ENCODE measurements at regions of chr15 and their contacts with region 1.

Region 1: DNA sequence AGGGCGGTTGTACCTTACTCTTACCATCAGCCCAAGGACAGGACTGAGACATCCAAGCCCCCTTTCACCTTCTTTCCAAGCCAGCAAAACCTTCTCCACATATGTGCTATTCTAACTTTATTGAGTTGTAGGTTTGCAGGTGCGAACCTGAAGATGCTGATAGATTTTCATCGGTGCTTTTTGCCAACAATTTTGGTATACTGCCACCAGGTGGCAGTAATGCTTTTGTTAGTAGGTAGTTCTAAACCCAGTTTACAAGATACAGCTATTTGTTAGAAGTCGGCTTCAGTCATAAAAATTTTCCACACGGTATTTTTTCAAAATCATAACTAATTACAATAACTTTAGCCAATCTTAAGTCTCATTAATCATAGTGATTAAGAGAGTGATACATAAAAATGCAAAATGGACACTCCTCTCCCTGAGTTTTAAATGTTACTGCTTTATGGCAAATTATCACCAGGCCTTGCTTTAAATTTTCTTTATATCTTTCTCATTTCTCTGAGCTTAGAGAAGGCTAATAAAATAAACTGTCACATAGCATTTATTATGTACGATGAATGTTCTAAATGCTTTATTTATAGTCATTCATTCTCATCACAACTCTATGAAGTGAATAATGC is 636 bp downstream of the TBC1D21 start:
- DNase-seq: peak; percentile 55
- ATAC-seq: no peak
- H3K4me3 Mint-ChIP-seq: no peak overlapping the region
- H3K27ac Mint-ChIP-seq: no peak overlapping the region
- H3K4me1 Mint-ChIP-seq: no peaks in the 10 kb centered on the region
- H3K27me3 Mint-ChIP-seq: peaks cover 10% of the 10 kb centered on the region
- CTCF ChIP-seq: peak; percentile 78

Region 2: DNA sequence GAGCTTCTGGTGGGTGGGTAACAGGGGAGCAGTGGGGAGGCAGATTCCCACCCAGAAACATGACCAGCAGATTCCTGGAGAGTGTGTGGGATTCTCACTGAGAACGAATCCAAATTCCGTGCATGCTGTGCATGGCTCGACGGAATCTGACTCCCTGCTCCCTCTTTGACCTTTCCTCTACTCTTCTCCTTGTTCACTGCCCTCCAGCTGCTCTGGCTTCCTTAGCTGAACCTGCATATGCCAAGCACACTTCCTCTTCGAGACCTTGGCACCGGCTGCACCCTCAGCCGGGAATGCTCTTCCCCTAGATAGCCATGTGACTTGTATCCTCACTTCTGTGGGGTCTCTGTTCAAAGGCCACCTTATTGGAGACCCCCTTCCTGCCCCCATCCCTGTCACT is 127.1 kb before region 1 on chr15:
- CTCF ChIA-PET with region 1: no interaction called
- POLR2A ChIA-PET with region 1: no interaction called
- intact Hi-C with region 1: no loop called
- DNase-seq: no peak
- ATAC-seq: no peak
- H3K4me3 Mint-ChIP-seq: no peak overlapping the region
- H3K27ac Mint-ChIP-seq: no peak overlapping the region
- H3K4me1 Mint-ChIP-seq: no peaks in the 10 kb centered on the region
- H3K27me3 Mint-ChIP-seq: peaks cover 21% of the 10 kb centered on the region
- CTCF ChIP-seq: no peak

Region 3: GRCh38 chr15:73885954-73886700 is 12.1 kb after region 1 on chr15:
- CTCF ChIA-PET with region 1: interaction called, 15 read pairs
- POLR2A ChIA-PET with region 1: interaction called, 3 read pairs
- intact Hi-C with region 1: no loop called
- DNase-seq: no peak
- ATAC-seq: no peak
- H3K4me3 Mint-ChIP-seq: no peak overlapping the region
- H3K27ac Mint-ChIP-seq: no peak overlapping the region
- H3K4me1 Mint-ChIP-seq: no peaks in the 10 kb centered on the region
- H3K27me3 Mint-ChIP-seq: peaks cover 8% of the 10 kb centered on the region
- CTCF ChIP-seq: no peak

Region 4: DNA sequence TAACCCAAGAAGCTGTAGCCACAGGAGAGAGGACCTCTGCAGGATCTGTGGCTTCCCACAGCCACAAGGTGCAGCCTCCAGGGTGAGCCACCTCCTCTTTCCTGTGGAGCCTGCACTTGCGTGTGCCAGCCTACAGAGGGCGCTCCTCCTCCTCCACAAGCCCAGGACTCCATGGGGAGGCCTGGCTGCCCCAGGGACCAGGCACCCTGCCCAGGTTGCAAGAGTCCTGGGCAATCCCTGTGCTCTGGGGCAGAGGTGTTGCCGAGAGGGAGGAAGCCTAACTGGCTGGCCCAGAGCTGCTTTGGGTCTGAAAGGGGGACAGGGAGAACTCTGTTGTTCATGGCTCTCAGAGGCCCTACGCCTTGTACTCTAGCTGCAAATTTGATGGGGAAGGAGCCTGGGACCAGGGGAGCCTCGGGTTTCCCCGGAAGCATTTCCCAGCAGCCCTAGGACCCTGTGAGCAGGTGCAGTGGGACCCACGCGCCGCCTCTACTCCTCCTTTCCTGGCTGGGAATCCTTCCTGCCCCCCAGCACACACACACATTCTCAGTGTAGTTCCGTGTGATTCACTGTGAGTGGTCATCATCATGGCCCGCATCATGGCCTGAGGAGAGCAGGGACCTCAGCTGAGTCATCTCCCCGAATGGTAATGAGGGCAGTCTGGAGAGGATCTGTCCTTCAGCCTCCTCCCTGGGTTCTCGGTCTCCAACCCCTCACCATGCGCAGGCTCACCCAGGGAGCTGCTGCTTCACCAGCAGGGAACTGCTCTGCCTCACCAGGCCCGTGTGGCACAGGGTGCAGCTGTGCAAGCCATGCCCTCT is 23.7 kb after region 1 on chr15:
- CTCF ChIA-PET with region 1: interaction called, 137 read pairs
- POLR2A ChIA-PET with region 1: no interaction called
- intact Hi-C with region 1: no loop called
- DNase-seq: peak; percentile 74
- ATAC-seq: peak; percentile 97
- H3K4me3 Mint-ChIP-seq: no peak overlapping the region
- H3K27ac Mint-ChIP-seq: no peak overlapping the region
- H3K4me1 Mint-ChIP-seq: no peaks in the 10 kb centered on the region
- H3K27me3 Mint-ChIP-seq: no peaks in the 10 kb centered on the region
- CTCF ChIP-seq: peak; percentile 97

Region 5: GRCh38 chr15:73927476-73928240 is 53.7 kb after region 1 on chr15:
- CTCF ChIA-PET with region 1: interaction called, 18 read pairs
- POLR2A ChIA-PET with region 1: no interaction called
- intact Hi-C with region 1: no loop called
- DNase-seq: peak; percentile 84
- ATAC-seq: peak; percentile 81
- H3K4me3 Mint-ChIP-seq: peak overlapping the region; percentile 70
- H3K27ac Mint-ChIP-seq: peak overlapping the region; percentile 68
- H3K4me1 Mint-ChIP-seq: peaks cover 39% of the 10 kb centered on the region
- H3K27me3 Mint-ChIP-seq: no peaks in the 10 kb centered on the region
- CTCF ChIP-seq: peak; percentile 95

Region 6: GRCh38 chr15:74172701-74173379 is 298.8 kb after region 1 on chr15:
- CTCF ChIA-PET with region 1: no interaction called
- POLR2A ChIA-PET with region 1: no interaction called
- intact Hi-C with region 1: no loop called
- DNase-seq: no peak
- ATAC-seq: no peak
- H3K4me3 Mint-ChIP-seq: no peak overlapping the region
- H3K27ac Mint-ChIP-seq: no peak overlapping the region
- H3K4me1 Mint-ChIP-seq: no peaks in the 10 kb centered on the region
- H3K27me3 Mint-ChIP-seq: no peaks in the 10 kb centered on the region
- CTCF ChIP-seq: no peak

Measured in activated CD8-positive, alpha-beta T cell treated with anti-CD3 and anti-CD28 coated beads for 36 hours (primary cell).